Colonic mucosa (tissue), 4 donors: ENCODE measurements at regions of chr18 and their contacts with region 1.

Region 1: GRCh38 chr18:58321986-58322385 is 278.0 kb downstream of the NEDD4L start:
- DNase-seq: peak; percentile 78
- H3K4me3 ChIP-seq: no peak overlapping the region
- H3K27ac ChIP-seq: peak overlapping the region; percentile 45
- H3K4me1 ChIP-seq: no peaks in the 10 kb centered on the region
- H3K27me3 ChIP-seq: no peaks in the 10 kb centered on the region
- CTCF ChIP-seq: peak; percentile 47

Region 2: DNA sequence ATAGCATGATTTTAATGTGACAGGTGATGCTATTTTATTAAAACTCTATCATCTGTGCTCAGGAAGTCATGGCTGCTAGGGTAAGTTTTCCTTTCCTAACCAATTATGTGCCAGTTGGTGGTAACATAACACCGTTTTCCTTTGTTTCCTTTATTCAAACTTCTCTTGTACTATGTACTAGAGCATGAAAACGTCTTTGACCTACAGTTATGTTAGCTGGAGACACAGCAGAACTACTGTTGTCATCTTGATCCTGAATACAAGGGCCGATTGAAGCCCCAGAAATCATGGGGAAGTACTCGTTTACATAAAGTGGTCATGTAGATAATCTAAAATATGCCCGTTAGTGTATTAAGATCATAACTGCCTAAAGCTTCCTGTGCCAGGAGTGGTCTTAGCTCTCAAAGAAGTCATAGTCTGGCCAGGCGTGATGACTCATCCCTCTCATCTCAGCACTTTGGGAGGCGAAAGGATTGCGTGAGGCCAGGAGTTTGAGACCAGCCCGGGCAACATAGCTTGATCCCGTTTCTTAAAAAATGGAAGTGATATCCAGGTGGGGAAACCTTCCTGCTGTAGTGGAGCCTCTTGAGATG is 257.5 kb before region 1 on chr18:
- intact Hi-C with region 1: loop called (anchors 10 kb)
- DNase-seq: no peak
- H3K4me3 ChIP-seq: no peak overlapping the region
- H3K27ac ChIP-seq: no peak overlapping the region
- H3K4me1 ChIP-seq: no peaks in the 10 kb centered on the region
- H3K27me3 ChIP-seq: no peaks in the 10 kb centered on the region
- CTCF ChIP-seq: no peak

Region 3: GRCh38 chr18:58135701-58136331 is 186.2 kb before region 1 on chr18:
- intact Hi-C with region 1: loop called (anchors 10 kb)
- DNase-seq: peak; percentile 75
- H3K4me3 ChIP-seq: no peak overlapping the region
- H3K27ac ChIP-seq: no peak overlapping the region
- H3K4me1 ChIP-seq: no peaks in the 10 kb centered on the region
- H3K27me3 ChIP-seq: no peaks in the 10 kb centered on the region
- CTCF ChIP-seq: peak; percentile 86

Region 4: DNA sequence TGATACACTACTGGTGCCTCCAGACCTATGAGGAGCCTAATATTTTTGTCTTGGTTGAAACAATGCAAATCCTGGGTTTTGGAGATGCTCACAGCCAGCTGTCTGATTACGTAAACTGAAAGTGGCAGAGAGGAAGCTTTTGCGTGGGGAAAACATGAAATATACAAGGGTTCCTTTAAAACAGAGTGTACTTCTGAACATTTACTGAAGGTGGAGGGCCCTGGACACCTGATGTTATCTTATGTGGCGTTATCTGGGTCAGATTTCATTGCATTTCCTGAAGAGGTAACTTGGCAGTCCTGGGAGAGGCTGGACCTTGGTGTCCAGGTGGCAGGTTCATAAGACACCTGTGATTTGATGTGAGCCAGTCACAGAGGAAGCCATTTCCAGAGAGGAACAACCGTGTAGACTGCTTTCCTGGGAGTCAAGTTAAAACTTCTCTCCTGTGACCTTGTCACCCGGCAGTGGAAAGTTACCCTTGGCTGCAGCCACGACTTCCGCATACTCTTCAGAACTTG is 173.0 kb before region 1 on chr18:
- intact Hi-C with region 1: no loop called
- DNase-seq: peak; percentile 49
- H3K4me3 ChIP-seq: peak overlapping the region; percentile 20
- H3K27ac ChIP-seq: peak overlapping the region; percentile 37
- H3K4me1 ChIP-seq: no peaks in the 10 kb centered on the region
- H3K27me3 ChIP-seq: no peaks in the 10 kb centered on the region
- CTCF ChIP-seq: peak; percentile 14

Region 5: GRCh38 chr18:58194028-58194427 is 128.0 kb before region 1 on chr18:
- intact Hi-C with region 1: loop called (anchors 5 kb)
- DNase-seq: peak; percentile 23
- H3K4me3 ChIP-seq: no peak overlapping the region
- H3K27ac ChIP-seq: no peak overlapping the region
- H3K4me1 ChIP-seq: no peaks in the 10 kb centered on the region
- H3K27me3 ChIP-seq: no peaks in the 10 kb centered on the region
- CTCF ChIP-seq: no peak